Mammary epithelial cell (primary cell): ENCODE measurements at regions of chr12 and their contacts with region 1.

Region 1: DNA sequence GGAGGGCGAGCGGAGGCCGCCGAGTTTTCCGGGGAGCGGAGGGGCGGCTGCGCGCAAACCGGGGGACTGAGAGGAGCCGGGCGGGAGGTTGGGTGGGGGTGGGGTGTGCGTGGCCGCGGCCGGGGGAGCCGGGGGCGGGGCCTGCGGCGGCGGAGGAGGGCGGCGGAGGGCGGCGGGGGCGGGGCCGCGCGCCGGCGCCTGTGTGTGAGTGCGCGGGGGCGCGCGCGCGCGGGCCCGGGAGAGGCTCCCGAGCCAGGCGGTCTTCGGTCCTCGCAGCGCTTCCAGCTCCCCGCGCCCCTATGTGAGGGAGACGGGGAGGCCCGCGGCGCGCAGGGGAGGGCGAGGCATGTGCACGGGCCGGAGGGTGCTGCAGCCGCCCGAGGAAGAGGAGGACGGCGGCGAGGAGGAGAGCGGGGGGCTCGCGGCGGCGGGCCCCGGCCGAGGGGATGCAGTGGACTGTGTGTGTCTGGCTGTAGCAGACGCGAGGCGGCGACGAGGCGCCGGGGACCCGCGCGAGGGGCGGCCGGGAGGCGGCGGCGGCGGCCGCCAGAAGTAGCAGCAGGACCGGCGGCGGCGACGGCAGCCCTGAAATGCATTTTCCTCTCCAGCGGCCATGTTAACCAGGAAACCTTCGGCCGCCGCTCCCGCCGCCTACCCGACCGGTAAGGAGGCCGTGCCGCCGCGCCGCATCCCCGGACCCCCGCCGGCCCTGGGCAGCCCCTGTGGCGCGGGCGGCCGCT is at the start of gene DYRK2:
- DNase-seq: peak; percentile 72
- H3K4me3 ChIP-seq: peak within 1 kb of the TSS; percentile 85 to 92 (median 88)
- H3K27ac ChIP-seq: peak within 1 kb of the TSS; percentile 86
- H3K4me1 ChIP-seq: peaks cover 25% of the 10 kb centered on the region
- H3K27me3 ChIP-seq: no peaks in the 10 kb centered on the region
- CTCF ChIP-seq: peak in 1 of 2 donors; percentile 6
- total RNA-seq, gene DYRK2: 17.8 to 25.8 TPM

Region 2: DNA sequence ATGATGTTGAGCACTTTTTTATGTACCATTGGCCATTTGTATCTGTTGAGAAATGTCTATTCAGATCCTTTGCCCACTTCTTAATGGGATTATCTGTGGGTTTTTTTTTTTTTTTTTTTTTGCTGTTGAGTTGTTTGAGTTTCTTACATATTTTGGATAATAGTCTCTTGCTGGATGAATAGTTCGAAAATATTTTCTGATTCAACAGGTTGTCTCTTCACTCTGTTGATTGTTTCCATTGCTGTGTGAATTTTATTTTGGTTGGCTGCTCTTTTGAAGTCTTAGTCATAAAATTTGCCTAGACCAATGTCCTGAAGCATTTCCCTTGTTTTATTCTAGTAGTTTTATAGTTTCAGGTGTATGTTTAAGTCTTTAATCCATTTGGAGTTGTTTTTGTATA is 315.0 kb before region 1 on chr12:
- CTCF ChIA-PET with region 1: no interaction called
- dilution Hi-C with region 1: no loop called
- in situ Hi-C with region 1: no loop called
- intact Hi-C with region 1: no loop called
- DNase-seq: no peak
- H3K4me3 ChIP-seq: no peak overlapping the region
- H3K27ac ChIP-seq: no peak overlapping the region
- H3K4me1 ChIP-seq: no peaks in the 10 kb centered on the region
- H3K27me3 ChIP-seq: no peaks in the 10 kb centered on the region
- CTCF ChIP-seq: no peak

Region 3: GRCh38 chr12:67441736-67442346 is 206.8 kb before region 1 on chr12:
- CTCF ChIA-PET with region 1: no interaction called
- dilution Hi-C with region 1: no loop called
- in situ Hi-C with region 1: no loop called
- intact Hi-C with region 1: loop called (anchors 2 kb)
- DNase-seq: peak; percentile 57
- H3K4me3 ChIP-seq: no peak overlapping the region
- H3K27ac ChIP-seq: no peak overlapping the region
- H3K4me1 ChIP-seq: no peaks in the 10 kb centered on the region
- H3K27me3 ChIP-seq: no peaks in the 10 kb centered on the region
- CTCF ChIP-seq: peak; percentile 73 to 89

Region 4: GRCh38 chr12:67515679-67516340 is 132.9 kb before region 1 on chr12:
- CTCF ChIA-PET with region 1: no interaction called
- dilution Hi-C with region 1: no loop called
- in situ Hi-C with region 1: no loop called
- intact Hi-C with region 1: loop called (anchors 2 kb)
- DNase-seq: no peak
- H3K4me3 ChIP-seq: no peak overlapping the region
- H3K27ac ChIP-seq: no peak overlapping the region
- H3K4me1 ChIP-seq: peaks cover 10% of the 10 kb centered on the region
- H3K27me3 ChIP-seq: peaks cover 2% of the 10 kb centered on the region
- CTCF ChIP-seq: no peak

Region 5: GRCh38 chr12:67811437-67812361 is 163.0 kb after region 1 on chr12:
- CTCF ChIA-PET with region 1: no interaction called
- dilution Hi-C with region 1: no loop called
- in situ Hi-C with region 1: no loop called
- intact Hi-C with region 1: loop called (anchors 10 kb)
- DNase-seq: peak; percentile 92
- H3K4me3 ChIP-seq: no peak overlapping the region
- H3K27ac ChIP-seq: peak overlapping the region; percentile 82
- H3K4me1 ChIP-seq: peaks cover 9% of the 10 kb centered on the region
- H3K27me3 ChIP-seq: no peaks in the 10 kb centered on the region
- CTCF ChIP-seq: no peak

Region 6: DNA sequence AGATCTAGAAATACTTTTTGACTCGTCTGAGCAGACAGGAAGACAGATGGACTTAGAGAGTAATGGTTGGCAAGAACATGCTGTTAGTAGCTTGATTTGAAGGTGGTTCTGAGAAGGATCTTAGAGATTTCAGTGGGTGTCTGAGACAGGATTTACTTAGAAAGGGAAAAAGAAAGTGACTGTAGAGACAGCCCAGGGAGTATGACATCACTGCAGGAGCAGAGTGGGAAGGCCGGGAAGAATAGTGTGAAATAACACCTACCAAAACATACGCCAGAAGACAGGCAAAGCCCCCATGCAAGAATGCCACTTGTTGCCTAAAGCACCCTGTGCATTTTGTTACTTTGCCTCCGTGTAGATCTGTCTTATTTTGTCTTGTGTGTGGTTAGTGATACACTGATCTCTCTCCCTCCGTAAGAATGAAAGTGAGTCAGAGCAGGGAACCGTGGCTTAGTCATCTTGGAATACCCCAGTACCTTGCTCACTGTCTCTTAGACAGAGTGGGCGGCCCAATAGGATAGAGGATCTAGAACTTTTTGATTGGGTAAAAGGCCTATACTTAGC is 179.2 kb after region 1 on chr12:
- CTCF ChIA-PET with region 1: no interaction called
- dilution Hi-C with region 1: no loop called
- in situ Hi-C with region 1: no loop called
- intact Hi-C with region 1: no loop called
- DNase-seq: peak; percentile 99
- H3K4me3 ChIP-seq: peak overlapping the region; percentile 19 to 57 (median 37)
- H3K27ac ChIP-seq: peak overlapping the region; percentile 88
- H3K4me1 ChIP-seq: peaks cover 15% of the 10 kb centered on the region
- H3K27me3 ChIP-seq: no peaks in the 10 kb centered on the region
- CTCF ChIP-seq: no peak

Region 7: DNA sequence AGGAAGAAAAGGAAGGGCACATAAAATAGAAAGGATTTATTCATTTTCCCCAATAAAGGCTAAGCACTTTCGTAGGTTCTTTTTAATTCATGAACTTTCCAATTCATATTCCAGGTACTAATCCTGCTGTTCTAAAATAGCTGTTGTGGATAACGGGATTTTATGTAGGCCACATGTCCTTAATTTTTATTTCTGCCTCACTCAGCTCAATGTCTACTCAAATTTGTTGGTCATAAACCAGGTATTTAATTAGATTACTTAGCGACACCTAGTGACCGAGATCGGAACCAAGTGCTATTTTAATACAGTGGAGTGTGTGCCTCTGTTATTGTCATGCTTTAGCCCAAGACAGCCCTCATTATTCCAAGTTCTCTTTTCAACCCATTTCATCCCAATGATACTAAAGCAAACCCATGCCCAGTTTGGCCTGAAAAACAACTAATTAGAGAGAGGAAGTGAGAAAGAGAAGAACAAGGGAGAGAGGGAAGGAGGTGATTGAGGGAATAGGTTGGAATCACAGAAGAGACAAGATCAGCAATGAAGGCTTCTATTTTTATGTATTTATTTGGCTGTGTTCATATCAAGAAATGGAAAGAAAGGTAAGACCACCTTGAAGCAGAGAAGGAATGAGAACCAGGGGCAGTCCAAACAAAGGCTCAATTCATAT is 294.7 kb after region 1 on chr12:
- CTCF ChIA-PET with region 1: interaction called, 6 read pairs
- dilution Hi-C with region 1: no loop called
- in situ Hi-C with region 1: loop called in 1 of 2 experiments (anchors 10 kb)
- intact Hi-C with region 1: loop called (anchors 1 kb)
- DNase-seq: peak; percentile 58
- H3K4me3 ChIP-seq: no peak overlapping the region
- H3K27ac ChIP-seq: no peak overlapping the region
- H3K4me1 ChIP-seq: peaks cover 6% of the 10 kb centered on the region
- H3K27me3 ChIP-seq: no peaks in the 10 kb centered on the region
- CTCF ChIP-seq: peak; percentile 61 to 69

Region 8: DNA sequence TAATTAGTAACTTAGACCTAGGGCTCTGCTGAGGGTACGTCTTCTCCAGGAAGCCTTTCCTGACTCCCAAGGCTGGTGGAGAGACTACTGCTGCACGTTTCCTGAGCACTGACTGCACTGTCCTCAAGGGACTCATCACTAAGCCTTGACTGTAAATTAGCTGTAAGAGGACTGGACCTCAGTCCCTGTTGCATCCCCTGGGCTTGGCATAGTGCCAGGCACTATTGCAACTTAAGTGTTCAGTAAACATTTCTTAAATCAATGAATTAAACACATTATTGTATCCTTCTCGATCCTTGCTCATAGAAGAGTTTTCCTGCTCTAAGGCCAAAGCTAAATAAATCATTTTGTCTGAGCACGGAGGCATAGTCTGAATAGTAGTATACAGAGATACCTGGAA is 308.7 kb after region 1 on chr12:
- CTCF ChIA-PET with region 1: no interaction called
- dilution Hi-C with region 1: no loop called
- in situ Hi-C with region 1: no loop called
- intact Hi-C with region 1: no loop called
- DNase-seq: no peak
- H3K4me3 ChIP-seq: no peak overlapping the region
- H3K27ac ChIP-seq: no peak overlapping the region
- H3K4me1 ChIP-seq: no peaks in the 10 kb centered on the region
- H3K27me3 ChIP-seq: peaks cover 4% of the 10 kb centered on the region
- CTCF ChIP-seq: no peak